ENCODE measurements at regions of chr7 and their contacts with region 1.

Region 1: GRCh38 chr7:23093546-23093945 is 12.0 kb upstream of the KLHL7 start:
- DNase-seq: peak; percentile 21
- H3K4me3 Mint-ChIP-seq: no peak overlapping the region
- H3K27ac Mint-ChIP-seq: no peak overlapping the region
- H3K4me1 Mint-ChIP-seq: no peaks in the 10 kb centered on the region
- H3K27me3 Mint-ChIP-seq: no peaks in the 10 kb centered on the region
- CTCF ChIP-seq: no peak

Region 2: DNA sequence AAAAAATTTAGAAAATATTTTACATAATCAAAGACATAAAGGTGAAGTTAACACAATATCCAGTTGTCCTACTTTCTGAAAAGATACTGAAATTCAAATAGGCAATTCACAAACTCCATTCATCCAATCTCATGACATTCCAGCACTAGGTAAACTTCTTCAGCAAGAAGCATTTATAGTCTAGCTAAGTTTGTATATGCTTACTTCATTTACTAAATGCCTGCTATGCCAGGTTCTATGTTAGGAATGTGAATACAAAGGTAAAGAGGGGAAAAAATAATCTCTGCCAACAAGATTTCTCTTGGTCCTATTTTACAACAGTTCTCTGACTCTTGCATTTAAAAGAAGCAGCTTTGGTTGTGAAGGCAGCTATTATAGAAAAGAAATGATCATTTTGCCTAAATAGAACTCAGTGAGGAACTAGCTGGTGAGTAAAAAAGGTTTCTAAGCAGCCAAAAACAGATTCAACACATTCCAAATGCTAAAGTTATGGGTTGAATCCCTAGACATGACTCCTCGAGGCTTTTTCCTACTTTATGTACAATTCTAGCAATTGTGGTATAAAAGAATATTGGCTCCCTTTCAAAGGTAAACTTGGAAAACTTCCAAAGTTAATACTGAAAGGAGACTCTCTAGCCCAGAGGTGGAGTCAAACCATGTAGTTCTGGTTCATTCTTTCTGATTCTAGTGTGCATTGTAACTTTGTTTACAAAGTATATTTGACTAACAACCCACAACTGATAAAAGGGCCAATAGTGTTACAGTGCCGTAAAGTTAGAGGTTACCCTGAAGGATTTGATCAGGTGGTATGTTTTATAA is 18.9 kb before region 1 on chr7:
- CTCF ChIA-PET with region 1: no interaction called
- POLR2A ChIA-PET with region 1: interaction called, 10 read pairs
- intact Hi-C with region 1: no loop called
- DNase-seq: peak; percentile 22
- H3K4me3 Mint-ChIP-seq: no peak overlapping the region
- H3K27ac Mint-ChIP-seq: no peak overlapping the region
- H3K4me1 Mint-ChIP-seq: peaks cover 15% of the 10 kb centered on the region
- H3K27me3 Mint-ChIP-seq: no peaks in the 10 kb centered on the region
- CTCF ChIP-seq: no peak

Region 3: GRCh38 chr7:23181684-23182553 is 88.4 kb after region 1 on chr7 and contains the start of gene NUP42:
- CTCF ChIA-PET with region 1: no interaction called
- POLR2A ChIA-PET with region 1: interaction called, 3 read pairs
- intact Hi-C with region 1: loop called (anchors 5 kb)
- DNase-seq: peak; percentile 98
- H3K4me3 Mint-ChIP-seq: peak within 1 kb of the TSS; percentile 90
- H3K27ac Mint-ChIP-seq: peak within 1 kb of the TSS; percentile 96
- H3K4me1 Mint-ChIP-seq: peaks cover 17% of the 10 kb centered on the region
- H3K27me3 Mint-ChIP-seq: no peaks in the 10 kb centered on the region
- CTCF ChIP-seq: no peak
- total RNA-seq, gene NUP42: 41.3 and 42.0 TPM in 2 replicates

Region 4: GRCh38 chr7:23261843-23262452 is 168.4 kb after region 1 on chr7:
- CTCF ChIA-PET with region 1: no interaction called
- POLR2A ChIA-PET with region 1: interaction called, 3 read pairs
- intact Hi-C with region 1: loop called (anchors 5 kb)
- DNase-seq: peak; percentile 75
- H3K4me3 Mint-ChIP-seq: no peak overlapping the region
- H3K27ac Mint-ChIP-seq: no peak overlapping the region
- H3K4me1 Mint-ChIP-seq: no peaks in the 10 kb centered on the region
- H3K27me3 Mint-ChIP-seq: no peaks in the 10 kb centered on the region
- CTCF ChIP-seq: peak; percentile 83

Region 5: DNA sequence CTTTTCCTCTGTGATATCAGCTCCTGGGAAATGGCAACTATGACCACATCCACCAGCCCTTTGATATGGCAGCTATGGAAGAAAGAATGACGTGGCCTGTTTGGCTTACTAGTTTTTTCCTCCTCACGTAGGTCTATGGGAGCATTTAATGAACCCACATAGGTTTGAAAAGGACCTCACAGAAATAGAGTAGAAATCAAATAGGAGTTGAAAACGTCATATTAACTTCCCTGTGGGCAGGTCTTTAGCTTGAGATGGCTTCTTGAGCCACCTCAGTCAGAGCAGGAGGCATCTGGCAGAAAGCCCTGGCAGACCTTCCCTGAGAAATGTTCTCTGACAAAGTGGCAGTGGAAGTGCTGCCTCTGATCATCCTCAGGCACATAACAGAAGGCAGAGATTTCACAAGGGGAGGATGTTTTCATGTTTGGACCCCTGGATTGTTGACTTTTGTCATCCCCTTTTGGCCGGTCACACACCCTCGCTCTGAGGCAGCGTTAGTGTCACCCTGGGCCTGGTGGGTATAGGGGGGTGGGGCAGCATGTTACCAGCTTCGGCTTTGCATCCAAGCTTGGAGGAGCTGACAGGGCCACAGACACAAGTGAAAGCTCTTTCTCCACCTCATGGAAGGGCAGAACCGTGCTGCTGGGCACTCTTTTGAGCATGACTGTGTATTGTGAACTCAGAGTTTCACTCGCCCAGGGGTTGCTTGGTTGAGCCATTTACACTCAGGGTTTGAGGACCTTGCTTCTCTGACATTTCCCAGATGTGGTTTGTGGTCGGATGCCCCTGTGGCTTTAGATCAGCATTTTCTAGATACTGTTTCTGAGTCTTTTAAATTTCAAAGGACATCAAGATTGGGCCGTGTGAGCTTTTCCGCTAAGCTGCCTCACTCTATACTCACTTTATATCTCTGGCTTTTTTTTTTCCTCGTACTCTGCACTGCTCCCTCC is 800.7 kb after region 1 on chr7:
- CTCF ChIA-PET with region 1: no interaction called
- POLR2A ChIA-PET with region 1: no interaction called
- intact Hi-C with region 1: no loop called
- DNase-seq: no peak
- H3K4me3 Mint-ChIP-seq: no peak overlapping the region
- H3K27ac Mint-ChIP-seq: no peak overlapping the region
- H3K4me1 Mint-ChIP-seq: no peaks in the 10 kb centered on the region
- H3K27me3 Mint-ChIP-seq: no peaks in the 10 kb centered on the region
- CTCF ChIP-seq: no peak